Endothelial cell of umbilical vein (primary cell): ENCODE measurements at regions of chr4 and their contacts with region 1.

Region 1: DNA sequence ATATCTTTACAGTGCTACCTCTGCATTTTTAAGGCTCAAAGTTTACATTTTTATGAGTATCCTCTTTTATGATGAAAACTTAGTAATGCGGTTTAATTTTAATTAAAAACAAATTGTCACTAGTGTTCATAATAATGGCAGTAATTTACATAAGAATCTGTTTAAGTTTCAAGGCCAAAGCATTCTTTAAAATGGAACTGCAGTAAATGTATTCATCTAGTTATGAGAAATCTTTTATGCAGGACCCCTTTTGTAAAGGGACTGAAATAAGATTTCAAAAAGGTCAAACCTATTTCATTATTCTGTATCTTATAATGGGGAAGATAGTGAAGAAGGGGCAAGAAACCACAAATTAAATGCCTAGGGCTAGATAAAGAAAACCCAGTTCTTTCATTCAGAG is 37.1 kb downstream of the CHIC2 start:
- DNase-seq: no peak
- H3K4me3 ChIP-seq: no peak overlapping the region
- H3K27ac ChIP-seq: no peak overlapping the region
- H3K4me1 ChIP-seq: no peaks in the 10 kb centered on the region
- H3K27me3 ChIP-seq: no peaks in the 10 kb centered on the region
- CTCF ChIP-seq: no peak
- POLR2A ChIP-seq: no peak

Region 2: GRCh38 chr4:54015423-54016030 is 11.8 kb before region 1 on chr4:
- CTCF ChIA-PET with region 1: interaction called, 5 read pairs
- POLR2A ChIA-PET with region 1: no interaction called
- dilution Hi-C with region 1: no loop called
- intact Hi-C with region 1: loop called (anchors 2 kb)
- DNase-seq: no peak
- H3K4me3 ChIP-seq: no peak overlapping the region
- H3K27ac ChIP-seq: no peak overlapping the region
- H3K4me1 ChIP-seq: no peaks in the 10 kb centered on the region
- H3K27me3 ChIP-seq: no peaks in the 10 kb centered on the region
- CTCF ChIP-seq: no peak
- POLR2A ChIP-seq: no peak

Region 3: GRCh38 chr4:54855191-54855854 is 828.0 kb after region 1 on chr4:
- CTCF ChIA-PET with region 1: no interaction called
- POLR2A ChIA-PET with region 1: no interaction called
- dilution Hi-C with region 1: no loop called
- intact Hi-C with region 1: no loop called
- DNase-seq: no peak
- H3K4me3 ChIP-seq: no peak overlapping the region
- H3K27ac ChIP-seq: no peak overlapping the region
- H3K4me1 ChIP-seq: no peaks in the 10 kb centered on the region
- H3K27me3 ChIP-seq: peaks cover 4 to 15% of the 10 kb centered on the region in 2 experiments
- CTCF ChIP-seq: no peak
- POLR2A ChIP-seq: no peak